ENCODE measurements at regions of chr5 and their contacts with region 1.

Region 1: GRCh38 chr5:38134810-38135209 is 123.5 kb upstream of the EGFLAM start:
- DNase-seq: peak; percentile 17 to 69
- ATAC-seq: peak; percentile 84 to 89 (median 88)
- H3K4me3 ChIP-seq: peak overlapping the region; percentile 42
- H3K27ac ChIP-seq: peak overlapping the region; percentile 82
- H3K4me1 ChIP-seq: peaks cover 12% of the 10 kb centered on the region
- H3K27me3 ChIP-seq: peaks cover 0 to 2% (median 0%) of the 10 kb centered on the region in 3 donors
- CTCF ChIP-seq: no peak

Region 2: DNA sequence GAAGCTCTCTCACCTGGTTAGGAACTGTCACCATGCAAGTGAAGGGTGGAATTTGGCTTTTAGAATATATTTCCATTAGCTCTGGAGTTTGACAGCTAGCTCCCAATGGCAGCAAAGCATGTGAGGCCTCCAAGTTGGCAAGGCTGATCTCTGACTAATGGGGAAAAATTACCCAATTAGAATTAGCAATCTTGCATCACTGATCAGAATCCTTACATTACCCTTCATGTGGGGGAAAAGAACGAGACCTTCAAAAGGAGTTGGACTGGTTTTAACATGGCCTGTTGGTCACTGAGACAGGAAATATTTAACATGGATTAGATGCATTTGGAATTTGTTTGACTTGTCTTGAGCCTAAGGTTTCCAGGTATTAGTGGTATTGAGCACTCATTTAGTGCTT is 102.7 kb before region 1 on chr5:
- intact Hi-C with region 1: no loop called
- DNase-seq: no peak
- ATAC-seq: no peak
- H3K4me3 ChIP-seq: no peak overlapping the region
- H3K27ac ChIP-seq: no peak overlapping the region
- H3K4me1 ChIP-seq: peaks cover under 1% of the 10 kb centered on the region
- H3K27me3 ChIP-seq: peaks cover 0 to 3% (median 0%) of the 10 kb centered on the region in 3 donors
- CTCF ChIP-seq: no peak

Region 3: DNA sequence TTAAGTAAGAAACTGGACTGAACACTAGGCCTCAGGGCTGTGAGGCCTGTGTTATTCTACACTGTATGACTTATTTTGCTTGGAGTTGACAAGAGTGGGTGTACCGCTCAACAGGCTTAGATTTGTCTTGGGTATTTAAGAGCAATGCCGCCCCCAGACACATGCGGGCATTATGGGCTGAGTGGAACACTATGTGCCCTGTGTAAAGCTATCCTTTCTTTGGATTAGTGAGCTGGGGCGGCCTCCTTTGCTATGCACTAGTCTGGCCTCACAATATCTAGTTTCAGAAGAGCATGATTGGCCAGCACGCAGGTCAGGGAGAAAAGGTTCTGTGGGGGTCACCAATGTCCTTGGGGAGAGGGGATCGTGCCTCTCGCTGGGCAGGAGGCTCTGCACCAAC is 88.7 kb before region 1 on chr5:
- intact Hi-C with region 1: loop called in 1 of 2 experiments (anchors 10 kb)
- DNase-seq: peak in 1 of 2 donors; percentile 68
- ATAC-seq: peak; percentile 46 to 93 (median 86)
- H3K4me3 ChIP-seq: no peak overlapping the region
- H3K27ac ChIP-seq: peak overlapping the region; percentile 73
- H3K4me1 ChIP-seq: peaks cover 5% of the 10 kb centered on the region
- H3K27me3 ChIP-seq: no peaks in the 10 kb centered on the region
- CTCF ChIP-seq: no peak